Ascending aorta (tissue), 2 donors: ENCODE measurements at regions of chr1 and their contacts with region 1.

Region 1: DNA sequence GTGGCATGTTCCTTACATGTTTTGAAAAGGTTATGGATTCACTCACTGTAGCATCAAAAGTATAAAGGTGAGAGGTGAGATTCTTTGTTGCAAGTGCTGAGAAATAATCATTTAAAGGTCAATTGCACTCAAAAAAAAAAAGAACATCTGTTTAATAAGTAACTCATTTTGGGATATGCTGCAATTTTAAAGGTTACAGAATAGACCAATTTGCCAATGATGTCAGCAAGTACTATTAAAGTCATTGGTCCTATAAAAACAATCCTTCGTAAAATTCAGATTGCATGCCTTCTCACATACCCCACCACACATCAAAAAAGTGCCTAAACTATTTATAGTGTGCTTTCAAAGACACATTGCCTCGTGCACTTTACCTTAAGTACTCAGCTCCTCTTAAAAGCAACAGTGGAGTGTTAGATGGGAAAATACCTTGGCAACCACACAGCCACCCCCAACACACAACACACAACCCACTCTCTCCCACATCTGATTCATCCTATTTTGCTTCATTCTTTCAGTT is 218.2 kb upstream of the ADGRL2 start:
- DNase-seq: no peak
- H3K4me3 ChIP-seq: no peak overlapping the region
- H3K27ac ChIP-seq: no peak overlapping the region
- H3K4me1 ChIP-seq: no peaks in the 10 kb centered on the region
- H3K27me3 ChIP-seq: no peaks in the 10 kb centered on the region
- CTCF ChIP-seq: no peak

Region 2: DNA sequence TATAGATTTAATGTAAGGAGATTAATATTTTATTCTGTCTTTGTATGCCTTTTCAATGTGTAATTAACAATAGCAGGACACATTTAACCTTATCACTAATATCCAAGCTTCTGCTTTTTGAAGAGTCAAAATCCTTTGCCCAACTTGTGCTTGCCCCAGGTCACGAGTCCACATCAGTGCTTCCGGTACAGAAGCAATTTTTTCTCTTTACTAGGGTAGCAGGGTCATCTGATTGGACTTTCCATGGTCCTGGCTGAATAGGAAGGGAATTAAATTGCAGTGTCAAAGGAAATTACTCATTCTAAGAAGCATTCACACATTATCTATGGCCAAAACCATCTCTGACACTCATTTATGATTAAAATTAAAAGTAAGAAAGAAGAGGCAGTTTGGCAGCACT is 242.3 kb before region 1 on chr1:
- intact Hi-C with region 1: no loop called
- DNase-seq: no peak
- H3K4me3 ChIP-seq: no peak overlapping the region
- H3K27ac ChIP-seq: no peak overlapping the region
- H3K4me1 ChIP-seq: peaks cover 0 to 2% of the 10 kb centered on the region in 2 donors
- H3K27me3 ChIP-seq: no peaks in the 10 kb centered on the region
- CTCF ChIP-seq: no peak

Region 3: DNA sequence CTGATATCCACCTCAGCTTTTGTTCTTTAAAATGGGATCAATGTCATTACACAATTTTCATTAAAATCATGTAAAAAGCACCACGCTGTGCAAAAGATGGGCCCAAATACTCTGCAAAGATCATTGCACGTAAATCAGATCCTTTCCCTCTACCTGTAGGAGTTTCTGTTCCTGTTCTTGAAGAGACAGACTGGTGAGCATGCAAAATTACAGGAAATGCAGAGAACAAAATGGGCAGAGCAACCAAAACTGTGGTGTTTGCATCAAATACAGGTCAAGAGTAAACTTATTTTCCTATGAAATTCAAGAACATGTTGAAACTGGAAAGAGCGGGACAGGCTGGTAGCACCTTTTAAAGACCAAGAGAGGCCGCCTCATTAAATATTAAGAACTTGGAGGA is 76.7 kb before region 1 on chr1:
- intact Hi-C with region 1: loop called (anchors 5 kb)
- DNase-seq: no peak
- H3K4me3 ChIP-seq: no peak overlapping the region
- H3K27ac ChIP-seq: no peak overlapping the region
- H3K4me1 ChIP-seq: no peaks in the 10 kb centered on the region
- H3K27me3 ChIP-seq: no peaks in the 10 kb centered on the region
- CTCF ChIP-seq: no peak